Uterus (tissue), 4 donors: ENCODE measurements at regions of chr14 and their contacts with region 1.

Region 1: GRCh38 chr14:35046048-35046741 is at the start of gene FAM177A1:
- DNase-seq: peak; percentile 98
- H3K4me3 ChIP-seq: peak within 1 kb of the TSS; percentile 69 to 82
- H3K27ac ChIP-seq: peak within 1 kb of the TSS; percentile 89 to 95
- H3K4me1 ChIP-seq: no peaks in the 10 kb centered on the region
- H3K27me3 ChIP-seq: no peaks in the 10 kb centered on the region
- CTCF ChIP-seq: no peak
- POLR2A ChIP-seq: peak in 1 of 2 donors; percentile 91
- total RNA-seq, gene FAM177A1: 12.4 to 82.2 (median 36.7) TPM

Region 2: GRCh38 chr14:34982417-34983147 is 63.6 kb before region 1 on chr14 and contains the start of gene SRP54:
- intact Hi-C with region 1: loop called (anchors 10 kb)
- DNase-seq: peak; percentile 97 to 99
- H3K4me3 ChIP-seq: peak within 1 kb of the TSS; percentile 95 to 98
- H3K27ac ChIP-seq: peak within 1 kb of the TSS; percentile 97 to 99
- H3K4me1 ChIP-seq: peaks cover 10 to 25% of the 10 kb centered on the region in 2 donors
- H3K27me3 ChIP-seq: no peaks in the 10 kb centered on the region
- CTCF ChIP-seq: peak; percentile 4 to 54 (median 24)
- POLR2A ChIP-seq: peak; percentile 92 to 94
- total RNA-seq, gene SRP54: 41.7 to 219 (median 82.1) TPM

Region 3: GRCh38 chr14:35222872-35223466 is 176.8 kb after region 1 on chr14:
- intact Hi-C with region 1: no loop called
- DNase-seq: no peak
- H3K4me3 ChIP-seq: no peak overlapping the region
- H3K27ac ChIP-seq: no peak overlapping the region
- H3K4me1 ChIP-seq: no peaks in the 10 kb centered on the region
- H3K27me3 ChIP-seq: no peaks in the 10 kb centered on the region
- CTCF ChIP-seq: no peak
- POLR2A ChIP-seq: no peak